ENCODE measurements at regions of chr14 and their contacts with region 1.

Region 1: GRCh38 chr14:76962303-76962660 is 66.2 kb downstream of the IRF2BPL start:
- DNase-seq: no peak
- H3K4me3 ChIP-seq: peak overlapping the region; percentile 48 to 61
- H3K4me3 Mint-ChIP-seq: peak overlapping the region; percentile 73 to 93 (median 86)
- H3K27ac ChIP-seq: peak overlapping the region; percentile 81
- H3K27ac Mint-ChIP-seq: peak overlapping the region; percentile 87 to 100 (median 97)
- H3K4me1 ChIP-seq: peaks cover 78% of the 10 kb centered on the region
- H3K4me1 Mint-ChIP-seq: peaks cover 50 to 79% (median 63%) of the 10 kb centered on the region in 4 donors
- H3K27me3 ChIP-seq: no peaks in the 10 kb centered on the region
- H3K27me3 Mint-ChIP-seq: no peaks in the 10 kb centered on the region

Region 2: DNA sequence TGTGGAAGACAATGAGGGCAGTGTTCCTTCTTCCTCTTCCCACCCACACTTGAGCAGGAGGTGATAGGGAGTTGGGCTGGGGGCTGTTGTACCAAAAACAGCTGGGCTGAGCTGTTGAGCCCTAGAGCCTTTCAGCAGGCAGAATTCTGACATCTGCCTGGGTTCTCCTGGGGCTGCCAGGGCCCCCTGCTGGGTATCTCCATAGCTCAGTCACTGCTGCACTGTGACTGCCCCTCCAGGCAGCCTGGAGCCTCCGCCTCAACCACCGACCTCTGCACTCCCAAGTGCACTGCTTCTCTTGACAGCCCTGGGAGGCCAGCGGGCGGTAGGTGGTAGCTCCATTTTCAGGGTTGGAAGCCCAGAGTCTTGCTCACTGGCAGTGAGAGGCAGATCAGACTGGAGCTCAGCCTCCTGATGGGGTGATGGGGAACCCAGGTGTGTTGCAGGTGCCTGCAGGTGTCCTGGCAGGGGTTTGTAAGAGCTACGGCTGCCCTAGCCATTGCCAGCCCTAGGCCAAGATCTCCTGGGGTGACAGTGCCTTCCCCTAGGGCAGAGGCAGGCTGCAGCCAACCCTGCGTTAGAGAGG is 185.5 kb before region 1 on chr14:
- CTCF ChIA-PET with region 1: no interaction called
- POLR2A ChIA-PET with region 1: no interaction called
- intact Hi-C with region 1: no loop called
- DNase-seq: no peak
- H3K4me3 ChIP-seq: no peak overlapping the region
- H3K4me3 Mint-ChIP-seq: no peak overlapping the region
- H3K27ac ChIP-seq: no peak overlapping the region
- H3K27ac Mint-ChIP-seq: no peak overlapping the region
- H3K4me1 ChIP-seq: peaks cover 6% of the 10 kb centered on the region
- H3K4me1 Mint-ChIP-seq: peaks cover 1 to 7% (median 4%) of the 10 kb centered on the region in 4 donors
- H3K27me3 ChIP-seq: no peaks in the 10 kb centered on the region
- H3K27me3 Mint-ChIP-seq: no peaks in the 10 kb centered on the region

Region 3: DNA sequence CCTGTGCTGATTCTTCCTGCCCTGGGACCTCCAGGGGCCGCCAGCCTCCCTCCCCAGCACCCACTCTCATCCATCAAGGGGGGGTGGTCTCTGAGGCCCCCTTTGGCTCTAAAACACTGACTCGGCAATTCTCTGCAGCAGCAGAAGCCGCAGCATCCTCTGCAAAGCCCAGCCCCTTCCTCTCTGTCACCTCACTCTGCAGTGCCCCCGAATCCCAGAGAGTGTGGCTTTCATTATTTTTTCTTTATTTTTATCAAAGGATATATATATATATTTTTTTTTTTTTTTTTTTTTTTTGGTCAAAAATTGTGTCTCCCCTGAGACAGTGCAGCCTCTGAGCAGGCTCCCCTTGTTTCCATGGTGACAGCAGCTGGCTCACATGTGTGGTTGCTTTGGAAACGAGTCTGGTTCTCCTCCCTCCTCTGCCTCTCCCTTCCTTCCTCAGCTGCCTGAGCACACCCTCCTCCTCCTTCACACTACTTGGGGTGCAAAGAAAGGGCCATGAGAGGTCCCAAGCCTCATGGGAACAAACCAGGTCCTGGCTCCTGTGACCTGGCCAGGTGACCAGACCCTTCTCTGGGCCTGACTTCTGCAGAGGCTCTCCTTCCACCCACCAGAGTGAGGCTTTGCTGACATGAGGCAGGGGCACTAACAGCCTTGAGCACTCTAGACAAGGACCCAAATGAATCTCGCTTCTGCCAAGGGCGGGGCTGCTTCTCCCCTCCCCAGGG is 35.6 kb before region 1 on chr14:
- CTCF ChIA-PET with region 1: interaction called, 9 read pairs
- POLR2A ChIA-PET with region 1: interaction called, 29 read pairs
- intact Hi-C with region 1: loop called (anchors 1 kb)
- DNase-seq: peak; percentile 75 to 96 (median 83)
- H3K4me3 ChIP-seq: peak overlapping the region; percentile 3 to 51
- H3K4me3 Mint-ChIP-seq: peak overlapping the region; percentile 71 to 90 (median 82)
- H3K27ac ChIP-seq: peak overlapping the region; percentile 89
- H3K27ac Mint-ChIP-seq: peak overlapping the region; percentile 83 to 99 (median 97)
- H3K4me1 ChIP-seq: peaks cover 78% of the 10 kb centered on the region
- H3K4me1 Mint-ChIP-seq: peaks cover 59 to 97% (median 80%) of the 10 kb centered on the region in 4 donors
- H3K27me3 ChIP-seq: no peaks in the 10 kb centered on the region
- H3K27me3 Mint-ChIP-seq: no peaks in the 10 kb centered on the region

Region 4: DNA sequence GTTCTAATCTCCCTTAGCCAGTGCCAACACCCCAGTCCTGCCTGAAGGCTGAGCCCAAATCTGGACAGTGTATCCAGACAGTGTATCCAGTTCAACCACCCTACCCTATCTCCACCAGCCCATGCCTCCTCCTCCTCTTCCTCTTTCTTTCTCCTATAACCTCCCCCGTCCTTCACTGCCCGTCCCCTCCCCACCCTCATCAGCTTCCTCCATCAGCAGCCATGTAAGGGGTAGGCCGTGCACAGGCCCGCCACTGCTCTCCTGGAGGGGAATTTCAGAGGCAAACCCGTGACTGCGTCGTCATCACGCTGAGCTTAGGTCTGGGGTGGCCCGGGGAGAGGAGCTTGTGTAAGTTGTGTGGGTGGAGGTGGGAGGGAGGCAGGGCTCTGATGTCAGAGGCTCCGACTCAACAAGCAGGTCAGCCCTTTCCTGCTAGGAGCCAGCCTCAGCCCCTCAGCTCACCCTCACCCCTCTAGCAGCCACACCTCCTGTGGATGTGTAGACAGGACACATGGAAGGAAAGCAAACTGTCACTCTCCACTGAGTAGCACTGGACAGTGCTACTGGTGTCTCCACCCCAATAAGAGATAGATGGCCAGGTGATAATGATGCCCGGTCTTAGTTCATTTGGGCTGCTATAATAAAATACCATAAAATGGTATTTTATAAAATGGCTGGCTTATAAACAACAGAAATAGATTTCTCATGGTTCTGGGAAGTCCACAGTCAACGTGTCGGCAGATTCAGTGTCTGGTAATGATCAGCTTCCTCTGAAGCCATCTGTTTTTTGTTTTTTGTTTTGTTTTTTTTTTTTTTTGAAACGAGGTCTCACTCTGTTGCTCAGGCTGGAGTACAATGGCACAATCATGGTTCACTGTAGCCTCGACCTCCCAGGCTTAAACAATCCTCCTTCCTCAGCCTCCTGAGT is 15.8 kb after region 1 on chr14:
- CTCF ChIA-PET with region 1: interaction called, 4 read pairs
- POLR2A ChIA-PET with region 1: interaction called, 10 read pairs
- intact Hi-C with region 1: loop called (anchors 1 kb)
- DNase-seq: peak; percentile 67 to 97 (median 74)
- H3K4me3 ChIP-seq: no peak overlapping the region
- H3K4me3 Mint-ChIP-seq: peak overlapping the region in 7 of 8 donors; percentile 4 to 75 (median 43)
- H3K27ac ChIP-seq: peak overlapping the region; percentile 54
- H3K27ac Mint-ChIP-seq: peak overlapping the region; percentile 79 to 94 (median 93)
- H3K4me1 ChIP-seq: peaks cover 18% of the 10 kb centered on the region
- H3K4me1 Mint-ChIP-seq: peaks cover 10 to 13% (median 11%) of the 10 kb centered on the region in 4 donors
- H3K27me3 ChIP-seq: no peaks in the 10 kb centered on the region
- H3K27me3 Mint-ChIP-seq: no peaks in the 10 kb centered on the region

Region 5: DNA sequence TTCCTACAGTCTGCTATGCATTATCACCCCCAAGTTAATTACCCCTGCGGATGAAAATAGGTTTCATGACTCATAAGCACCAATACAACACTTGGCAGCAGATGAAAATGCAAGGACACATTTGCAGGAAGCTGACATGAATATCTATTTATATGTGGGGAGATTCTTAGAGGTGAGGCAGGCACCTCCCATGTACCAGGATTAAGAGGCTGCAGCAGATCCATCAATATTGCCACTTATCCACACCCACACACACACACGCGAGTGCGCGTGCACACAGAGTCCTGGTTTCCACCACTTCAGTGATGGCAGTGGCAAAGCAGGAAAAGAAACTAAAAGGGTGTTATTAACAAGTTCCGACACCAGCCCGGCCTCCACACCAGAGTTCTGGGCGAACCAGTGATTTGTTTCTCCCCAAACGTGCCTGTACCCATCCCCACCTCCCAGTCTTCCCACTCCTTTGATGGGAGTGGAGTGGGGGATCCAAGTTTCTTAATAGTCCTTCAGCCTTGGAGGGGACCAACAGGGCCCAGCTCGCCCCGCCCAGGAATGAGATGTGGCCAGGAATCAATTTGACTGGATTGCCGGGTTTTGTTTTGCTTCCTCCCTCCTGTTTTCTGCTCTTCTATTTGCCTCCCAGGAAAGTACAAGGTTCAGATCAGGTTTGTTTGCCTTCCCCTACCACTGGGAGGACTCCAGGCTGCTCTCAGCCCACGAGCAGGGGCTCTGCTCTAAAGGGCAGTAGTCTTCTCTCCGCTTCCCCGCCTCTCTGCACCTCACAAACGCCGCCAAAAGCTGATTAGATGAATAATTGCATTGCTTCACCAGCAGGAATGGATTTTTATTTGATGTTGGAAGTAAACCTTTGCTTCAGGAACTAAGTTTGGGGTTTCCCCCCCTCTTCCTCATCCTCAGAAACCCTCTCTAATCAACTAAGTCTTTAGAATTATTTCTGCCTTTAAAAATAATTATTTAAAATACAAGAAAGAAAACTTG is 61.0 kb after region 1 on chr14:
- CTCF ChIA-PET with region 1: interaction called, 18 read pairs
- POLR2A ChIA-PET with region 1: interaction called, 132 read pairs
- intact Hi-C with region 1: loop called (anchors 1 kb)
- DNase-seq: no peak
- H3K4me3 ChIP-seq: peak overlapping the region in 1 of 2 donors; percentile 9
- H3K4me3 Mint-ChIP-seq: peak overlapping the region; percentile 30 to 73 (median 65)
- H3K27ac ChIP-seq: no peak overlapping the region
- H3K27ac Mint-ChIP-seq: peak overlapping the region; percentile 66 to 98 (median 83)
- H3K4me1 ChIP-seq: peaks cover 52% of the 10 kb centered on the region
- H3K4me1 Mint-ChIP-seq: peaks cover 26 to 49% (median 37%) of the 10 kb centered on the region in 4 donors
- H3K27me3 ChIP-seq: no peaks in the 10 kb centered on the region
- H3K27me3 Mint-ChIP-seq: no peaks in the 10 kb centered on the region

Region 6: GRCh38 chr14:77033622-77034521 is 71.6 kb after region 1 on chr14:
- CTCF ChIA-PET with region 1: interaction called, 11 read pairs
- POLR2A ChIA-PET with region 1: interaction called, 132 read pairs
- intact Hi-C with region 1: no loop called
- DNase-seq: peak; percentile 63 to 90 (median 72)
- H3K4me3 ChIP-seq: peak overlapping the region; percentile 71 to 84
- H3K4me3 Mint-ChIP-seq: peak overlapping the region; percentile 91 to 94 (median 92)
- H3K27ac ChIP-seq: peak overlapping the region; percentile 98
- H3K27ac Mint-ChIP-seq: peak overlapping the region; percentile 94 to 99 (median 98)
- H3K4me1 ChIP-seq: peaks cover 93% of the 10 kb centered on the region
- H3K4me1 Mint-ChIP-seq: peaks cover 53 to 87% (median 70%) of the 10 kb centered on the region in 4 donors
- H3K27me3 ChIP-seq: no peaks in the 10 kb centered on the region
- H3K27me3 Mint-ChIP-seq: no peaks in the 10 kb centered on the region

Region 7: DNA sequence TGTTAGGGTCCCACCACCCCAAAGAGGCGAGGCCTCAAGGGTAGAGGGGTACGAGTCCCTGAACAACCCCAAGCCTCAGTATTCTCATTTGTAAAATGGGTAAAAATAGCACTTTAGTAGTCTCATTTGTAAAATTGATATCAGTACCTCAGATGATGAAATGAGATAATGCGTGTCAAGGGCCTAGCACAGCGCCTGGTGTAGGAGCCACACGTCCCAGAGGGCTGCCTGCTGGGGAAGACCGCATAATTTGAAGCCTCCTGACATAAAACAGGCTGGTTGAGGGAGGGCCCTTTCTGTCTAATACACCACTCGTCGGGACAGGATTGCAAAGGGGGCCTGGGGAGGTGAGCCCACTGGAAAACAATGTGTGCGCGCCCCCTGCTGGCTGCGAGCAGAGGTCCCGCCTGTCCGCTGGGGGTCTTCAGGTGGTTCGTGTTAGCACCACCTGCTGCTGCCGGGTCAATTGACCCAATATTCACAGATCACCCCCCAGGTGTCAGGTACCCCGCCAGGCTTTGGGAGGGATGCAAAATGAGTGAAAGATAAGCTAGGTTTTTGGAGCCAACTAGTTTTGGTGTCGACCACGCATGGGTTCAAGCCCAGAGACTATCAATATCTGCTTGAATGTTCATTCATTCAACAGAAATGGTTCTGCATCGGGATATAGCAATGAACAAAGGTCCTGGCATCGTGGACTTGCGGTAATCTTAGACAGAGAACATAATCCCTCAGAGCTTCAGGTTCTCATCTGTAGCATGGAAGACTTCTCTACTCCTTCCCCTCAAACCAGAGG is 91.0 kb after region 1 on chr14:
- CTCF ChIA-PET with region 1: interaction called, 37 read pairs
- POLR2A ChIA-PET with region 1: interaction called, 23 read pairs
- intact Hi-C with region 1: no loop called
- DNase-seq: peak; percentile 68 to 75 (median 69)
- H3K4me3 ChIP-seq: no peak overlapping the region
- H3K4me3 Mint-ChIP-seq: peak overlapping the region in 1 of 8 donors; percentile 51
- H3K27ac ChIP-seq: no peak overlapping the region
- H3K27ac Mint-ChIP-seq: peak overlapping the region in 6 of 7 donors; percentile 24 to 79 (median 49)
- H3K4me1 ChIP-seq: peaks cover 25% of the 10 kb centered on the region
- H3K4me1 Mint-ChIP-seq: peaks cover 16 to 36% (median 22%) of the 10 kb centered on the region in 4 donors
- H3K27me3 ChIP-seq: no peaks in the 10 kb centered on the region
- H3K27me3 Mint-ChIP-seq: no peaks in the 10 kb centered on the region